Head of caudate nucleus (tissue), 42 donors: ENCODE measurements at regions of chr12 and their contacts with region 1.

Region 1: DNA sequence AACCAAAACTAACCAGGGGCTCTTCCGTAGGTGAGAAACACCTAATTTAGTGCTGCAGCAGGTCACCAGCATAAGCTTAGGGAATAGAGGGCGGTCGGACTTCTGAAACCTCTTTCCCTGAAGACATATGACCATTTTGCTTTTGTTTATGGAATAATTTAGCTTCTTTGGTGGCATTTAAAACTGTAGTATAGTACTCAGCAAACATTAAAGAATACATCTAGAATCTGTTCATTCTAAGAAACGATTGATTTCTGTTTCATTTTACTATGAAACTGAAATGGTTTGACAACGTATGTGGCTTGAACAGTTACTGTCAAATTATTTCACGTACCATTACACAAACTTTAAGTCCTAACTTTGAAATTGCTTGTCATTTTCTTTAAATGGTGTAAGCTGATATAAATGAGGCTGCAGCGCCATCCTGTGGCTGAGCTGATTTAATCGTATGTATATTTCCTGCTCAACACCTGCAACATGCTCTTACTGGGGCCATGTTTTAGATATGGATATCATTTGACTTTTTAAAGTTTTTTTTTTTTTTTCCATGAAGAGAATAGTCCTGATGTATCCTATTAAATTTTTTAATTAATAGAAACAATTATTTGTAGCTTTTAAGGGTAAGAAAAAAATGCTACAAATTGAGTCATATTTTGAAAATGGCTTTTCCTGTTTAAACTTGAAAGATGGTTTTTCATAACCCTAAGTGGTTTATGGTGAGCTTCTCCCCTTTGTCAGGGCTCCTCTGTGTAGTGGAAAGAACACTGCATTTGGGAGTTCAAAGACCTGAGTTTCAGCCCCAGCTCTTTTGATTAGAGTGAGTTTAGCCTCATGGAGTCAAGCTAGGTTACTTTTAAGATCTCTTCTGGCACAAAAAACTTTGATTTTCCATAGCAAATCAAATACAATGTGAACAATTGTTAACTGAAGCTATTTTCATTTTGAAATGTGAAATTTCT is 27.4 kb downstream of the CFAP54 start:
- DNase-seq: peak; percentile 12 to 91 (median 81)

Region 2: GRCh38 chr12:95986635-95987570 is 529.8 kb before region 1 on chr12:
- intact Hi-C with region 1: no loop called
- DNase-seq: no peak

Region 3: DNA sequence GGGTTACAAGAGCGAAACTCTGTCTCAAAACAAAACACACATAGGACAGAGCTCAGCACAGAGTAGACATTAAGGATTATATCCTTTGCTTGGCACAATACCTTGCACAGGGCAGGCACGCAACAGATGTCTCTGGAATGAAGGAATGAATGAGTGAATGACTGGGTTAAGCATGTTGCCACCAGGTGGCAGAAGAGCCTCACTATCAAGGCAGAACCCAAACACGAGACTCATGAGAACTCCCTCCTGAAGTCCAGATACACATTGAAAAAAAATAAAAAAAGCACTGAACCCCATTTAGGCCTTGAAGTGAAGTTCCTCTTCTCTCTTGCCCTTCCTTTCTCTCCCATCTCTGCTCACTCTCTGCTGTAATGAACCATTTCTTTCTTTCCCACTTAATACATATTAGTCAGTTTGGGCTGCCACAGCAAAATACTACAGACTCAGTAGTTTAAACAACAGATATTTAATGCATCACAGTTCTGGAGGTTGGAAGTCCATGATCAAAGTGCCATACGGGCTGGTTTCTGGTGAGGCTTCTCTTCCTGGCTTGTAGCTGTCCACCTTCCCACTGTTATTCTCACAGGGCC is 454.8 kb before region 1 on chr12:
- intact Hi-C with region 1: loop called (anchors 5 kb)
- DNase-seq: peak; percentile 19 to 86 (median 69)

Region 4: GRCh38 chr12:96208801-96209549 is 307.8 kb before region 1 on chr12:
- intact Hi-C with region 1: loop called (anchors 10 kb)
- DNase-seq: peak in 2 of 42 donors; percentile 16 to 29